ENCODE measurements at regions of chr4 and their contacts with region 1.

Region 1: DNA sequence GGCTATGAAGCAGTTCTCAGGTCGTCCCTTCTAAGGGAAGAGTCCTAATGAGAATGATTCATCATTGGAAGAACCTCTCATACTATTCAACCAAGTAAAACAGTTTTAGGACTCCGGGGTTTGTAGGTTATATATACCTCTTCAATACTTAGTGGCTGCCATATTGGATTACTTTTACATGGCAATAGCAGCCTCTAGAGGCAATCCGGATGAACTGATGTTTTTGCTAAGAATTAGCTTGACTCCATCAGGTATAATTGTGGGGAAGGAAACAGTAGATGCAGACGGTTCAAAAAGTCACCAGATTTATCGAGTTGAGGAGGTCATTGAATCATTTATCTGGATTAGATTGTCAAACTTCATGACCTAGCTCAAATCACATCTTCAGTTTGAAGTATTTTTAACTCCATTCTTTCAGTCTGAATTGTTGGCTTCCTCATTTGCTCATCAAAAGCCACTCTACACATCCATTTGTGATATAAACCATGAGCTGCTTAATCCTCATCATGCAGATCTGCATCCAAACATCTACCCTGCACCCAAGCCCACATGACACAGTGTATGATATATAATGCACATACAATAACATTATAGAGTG is 28.4 kb downstream of the GUCY1B1 start:
- DNase-seq: peak; percentile 31
- ATAC-seq: peak; percentile 76
- H3K4me3 Mint-ChIP-seq: no peak overlapping the region
- H3K27ac Mint-ChIP-seq: no peak overlapping the region
- H3K4me1 Mint-ChIP-seq: no peaks in the 10 kb centered on the region
- H3K27me3 Mint-ChIP-seq: no peaks in the 10 kb centered on the region

Region 2: GRCh38 chr4:155445306-155445705 is 341.9 kb before region 1 on chr4:
- CTCF ChIA-PET with region 1: interaction called, 10 read pairs
- POLR2A ChIA-PET with region 1: no interaction called
- DNase-seq: no peak
- ATAC-seq: no peak
- H3K4me3 Mint-ChIP-seq: no peak overlapping the region
- H3K27ac Mint-ChIP-seq: no peak overlapping the region
- H3K4me1 Mint-ChIP-seq: peaks cover 3% of the 10 kb centered on the region
- H3K27me3 Mint-ChIP-seq: peaks cover 12% of the 10 kb centered on the region

Region 3: GRCh38 chr4:155802190-155802959 is 15.2 kb after region 1 on chr4:
- CTCF ChIA-PET with region 1: interaction called, 10 read pairs
- POLR2A ChIA-PET with region 1: no interaction called
- DNase-seq: no peak
- ATAC-seq: no peak
- H3K4me3 Mint-ChIP-seq: no peak overlapping the region
- H3K27ac Mint-ChIP-seq: no peak overlapping the region
- H3K4me1 Mint-ChIP-seq: peaks cover 6% of the 10 kb centered on the region
- H3K27me3 Mint-ChIP-seq: no peaks in the 10 kb centered on the region